ENCODE measurements at regions of chr2 and their contacts with region 1.

Region 1: GRCh38 chr2:121530212-121530705 is 421 bp upstream of the RNU4ATAC start:
- DNase-seq: peak; percentile 81 to 94 (median 92)
- ATAC-seq: peak; percentile 84 to 85
- H3K4me3 ChIP-seq: peak overlapping the region; percentile 54
- H3K27ac ChIP-seq: peak overlapping the region; percentile 100
- H3K4me1 ChIP-seq: peaks cover 10% of the 10 kb centered on the region
- H3K27me3 ChIP-seq: no peaks in the 10 kb centered on the region

Region 2: DNA sequence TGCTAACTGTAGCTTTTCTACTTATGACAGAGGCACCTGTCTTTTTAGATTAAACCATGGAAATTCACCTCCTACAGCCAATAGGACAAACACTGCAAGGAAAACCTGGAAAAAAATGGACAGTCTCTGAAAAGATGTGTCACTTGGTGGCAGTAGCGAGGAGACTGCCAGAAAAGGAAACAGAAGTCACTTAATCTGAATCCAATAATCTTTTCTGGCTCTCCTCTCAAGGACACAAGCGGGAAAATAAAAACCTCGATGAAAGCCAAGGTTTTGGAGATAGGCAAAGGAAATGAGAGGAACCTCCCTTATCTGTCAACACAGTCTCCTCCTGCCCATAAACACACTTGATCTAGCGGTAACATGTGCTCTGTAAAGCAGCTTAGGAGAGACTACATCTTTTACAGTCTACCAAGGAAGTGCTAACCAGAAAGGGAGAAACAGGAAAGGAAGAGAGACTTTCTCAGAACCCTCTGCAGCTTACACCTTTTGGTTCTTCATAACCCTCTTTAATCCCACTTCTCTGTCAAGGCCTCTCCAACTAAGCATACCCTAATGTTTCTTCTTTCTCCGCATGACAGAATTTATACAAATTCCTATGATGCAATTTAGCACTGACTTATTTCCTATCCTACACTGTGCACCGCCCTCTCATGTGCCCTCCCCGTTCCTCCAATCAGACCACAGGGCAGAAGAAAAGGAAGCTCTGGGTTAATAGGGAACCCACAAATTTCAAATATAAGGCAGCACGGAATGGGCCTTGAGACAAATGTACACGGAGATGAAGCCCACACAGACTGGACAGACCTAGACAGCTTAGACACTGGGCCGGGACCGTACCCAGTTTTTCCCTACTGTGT is 66.2 kb after region 1 on chr2:
- intact Hi-C with region 1: loop called in 1 of 4 experiments (anchors 10 kb)
- DNase-seq: peak in 2 of 3 donors; percentile 35 to 63
- ATAC-seq: peak; percentile 85 to 89
- H3K4me3 ChIP-seq: peak overlapping the region; percentile 14
- H3K27ac ChIP-seq: peak overlapping the region; percentile 63
- H3K4me1 ChIP-seq: no peaks in the 10 kb centered on the region
- H3K27me3 ChIP-seq: no peaks in the 10 kb centered on the region

Region 3: DNA sequence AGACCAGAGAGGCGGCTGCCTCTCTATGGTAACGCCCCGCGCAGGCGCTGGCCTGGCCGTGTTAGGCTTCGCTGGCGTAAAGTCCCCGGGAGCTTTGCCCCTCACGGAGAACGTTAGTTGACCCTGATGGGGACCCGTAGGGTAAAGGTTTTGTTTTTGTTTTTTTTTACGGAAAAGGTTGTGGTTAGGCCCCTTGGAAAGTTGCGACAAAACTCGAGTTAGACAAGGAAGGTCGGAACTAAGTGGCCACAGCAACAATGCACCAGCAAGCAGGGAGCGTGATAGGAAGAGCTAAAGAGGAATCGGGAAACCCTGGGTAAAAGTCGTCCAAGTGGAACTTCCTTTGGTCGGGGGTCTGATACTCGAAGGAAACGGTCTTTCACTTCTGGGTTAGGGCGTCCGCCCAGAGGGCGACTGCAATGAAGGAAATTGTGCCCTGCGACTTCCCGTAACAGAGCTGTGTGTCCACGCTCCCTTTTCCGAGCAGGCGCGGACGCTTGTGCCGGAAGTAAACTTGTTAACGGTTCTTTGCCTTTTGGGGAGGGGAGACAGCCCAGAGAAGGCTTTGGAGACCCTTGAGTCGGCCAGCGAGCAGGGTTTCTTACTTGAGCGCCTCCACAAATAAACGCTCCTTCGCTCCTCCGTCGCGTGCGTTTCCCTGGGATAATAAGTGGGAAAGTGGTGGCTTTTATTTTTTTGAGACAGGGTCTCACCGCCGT is 119.5 kb after region 1 on chr2:
- intact Hi-C with region 1: loop called in 3 of 4 experiments (anchors 2 to 5 kb)
- DNase-seq: peak; percentile 98 to 99 (median 98)
- ATAC-seq: peak; percentile 99
- H3K4me3 ChIP-seq: peak overlapping the region; percentile 84
- H3K27ac ChIP-seq: peak overlapping the region; percentile 100
- H3K4me1 ChIP-seq: peaks cover 3% of the 10 kb centered on the region
- H3K27me3 ChIP-seq: no peaks in the 10 kb centered on the region

Region 4: GRCh38 chr2:121710470-121711170 is 180.4 kb after region 1 on chr2:
- intact Hi-C with region 1: loop called in 3 of 4 experiments (anchors 5 to 10 kb)
- DNase-seq: no peak
- ATAC-seq: no peak
- H3K4me3 ChIP-seq: no peak overlapping the region
- H3K27ac ChIP-seq: no peak overlapping the region
- H3K4me1 ChIP-seq: no peaks in the 10 kb centered on the region
- H3K27me3 ChIP-seq: no peaks in the 10 kb centered on the region

Region 5: GRCh38 chr2:121722479-121722878 is 192.2 kb after region 1 on chr2:
- intact Hi-C with region 1: loop called in 3 of 4 experiments (anchors 5 to 10 kb)
- DNase-seq: no peak
- ATAC-seq: peak in 1 of 2 donors; percentile 55
- H3K4me3 ChIP-seq: no peak overlapping the region
- H3K27ac ChIP-seq: no peak overlapping the region
- H3K4me1 ChIP-seq: no peaks in the 10 kb centered on the region
- H3K27me3 ChIP-seq: no peaks in the 10 kb centered on the region